Heart left ventricle (tissue), 16 donors: ENCODE measurements at regions of chrX and their contacts with region 1.

Region 1: GRCh38 chrX:108230574-108230973 is 139.0 kb downstream of the ATG4A start:
- DNase-seq: no peak
- ATAC-seq: no peak
- H3K4me3 ChIP-seq: no peak overlapping the region
- H3K27ac ChIP-seq: no peak overlapping the region
- H3K4me1 ChIP-seq: no peaks in the 10 kb centered on the region
- H3K27me3 ChIP-seq: peaks cover 0 to 43% (median 0%) of the 10 kb centered on the region in 9 donors
- CTCF ChIP-seq: no peak
- POLR2A ChIP-seq: no peak

Region 2: GRCh38 chrX:107710617-107711391 is 519.8 kb before region 1 on chrX:
- intact Hi-C with region 1: no loop called
- DNase-seq: peak in 2 of 5 donors; percentile 34 to 43
- ATAC-seq: peak; percentile 59 to 82 (median 78)
- H3K4me3 ChIP-seq: no peak overlapping the region
- H3K27ac ChIP-seq: peak overlapping the region; percentile 16 to 98 (median 92)
- H3K4me1 ChIP-seq: peaks cover 0 to 53% (median 7%) of the 10 kb centered on the region in 12 donors
- H3K27me3 ChIP-seq: no peaks in the 10 kb centered on the region
- CTCF ChIP-seq: no peak
- POLR2A ChIP-seq: no peak

Region 3: DNA sequence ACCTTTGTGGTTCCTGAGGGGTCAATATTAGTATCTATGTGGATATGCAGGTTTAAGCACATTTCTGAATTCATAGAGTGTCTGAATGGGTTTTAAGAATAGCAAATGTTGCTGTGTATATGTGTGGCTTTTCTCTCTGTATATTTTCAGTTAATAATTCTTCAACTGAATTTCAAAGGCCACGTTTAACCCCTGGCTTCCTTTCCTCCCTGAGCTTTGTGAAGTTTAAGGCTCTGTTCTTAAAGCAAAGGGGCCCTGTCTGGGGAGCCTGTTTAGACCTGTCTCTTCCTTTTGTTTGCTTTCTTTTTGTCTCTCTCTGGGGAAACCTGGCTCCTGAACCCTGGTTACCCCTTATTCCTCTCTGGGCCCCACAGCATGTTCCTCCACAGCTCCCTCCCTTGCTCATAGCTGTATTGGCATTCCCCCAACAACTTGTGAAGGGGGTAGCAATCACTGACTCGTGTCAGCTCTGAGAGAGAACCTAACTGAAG is 68.6 kb after region 1 on chrX:
- intact Hi-C with region 1: loop called in 6 of 10 experiments (anchors 2 to 10 kb)
- DNase-seq: no peak
- ATAC-seq: peak in 3 of 4 donors; percentile 47 to 64 (median 62)
- H3K4me3 ChIP-seq: no peak overlapping the region
- H3K27ac ChIP-seq: no peak overlapping the region
- H3K4me1 ChIP-seq: peaks cover 0 to 7% (median 0%) of the 10 kb centered on the region in 12 donors
- H3K27me3 ChIP-seq: peaks cover 0 to 25% (median 0%) of the 10 kb centered on the region in 9 donors
- CTCF ChIP-seq: no peak
- POLR2A ChIP-seq: no peak